Posterior cingulate gyrus (tissue), 11 donors: ENCODE measurements at regions of chr4 and their contacts with region 1.

Region 1: DNA sequence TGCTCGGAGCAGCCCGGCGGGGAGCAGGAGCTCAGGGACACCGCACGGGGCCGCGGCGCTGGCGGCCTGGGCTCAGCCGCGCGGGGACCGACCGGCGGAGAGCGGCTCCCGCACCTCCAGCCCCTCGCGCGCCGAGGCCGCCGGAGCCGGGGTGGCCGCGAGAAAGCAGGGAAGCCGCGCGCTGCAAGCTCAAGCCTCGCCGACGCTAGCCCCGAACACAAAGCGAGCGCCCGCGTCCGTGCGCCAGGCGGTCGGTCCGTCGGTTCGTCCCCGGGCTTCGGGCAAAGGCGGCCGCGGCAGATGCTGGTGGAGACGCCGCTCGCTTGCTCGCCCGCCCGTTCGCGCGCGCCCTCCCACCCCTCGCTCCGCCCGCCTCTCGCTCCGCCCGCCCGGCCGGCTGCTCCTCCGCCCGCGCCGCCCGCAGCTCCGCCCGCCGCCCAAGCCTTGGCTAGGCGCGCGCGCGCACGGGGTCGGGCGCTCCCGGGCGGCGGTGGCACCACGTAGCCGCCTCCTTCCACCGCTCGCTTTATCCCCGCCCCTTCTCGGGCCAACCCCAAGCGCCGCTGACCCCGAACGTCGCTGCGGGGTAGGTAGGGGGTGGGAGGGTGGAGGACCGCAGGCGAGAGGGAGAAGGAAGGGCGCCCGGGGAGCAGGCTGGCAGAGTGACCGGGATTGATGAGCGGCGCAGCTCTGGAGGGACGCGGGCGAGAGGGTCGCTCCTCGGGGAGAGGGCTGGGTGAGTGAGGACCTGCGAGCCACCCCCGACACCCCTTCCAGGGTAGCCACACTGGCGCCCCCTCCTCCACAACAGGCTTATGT is at the start of gene TSPAN5:
- DNase-seq: peak; percentile 70 to 97 (median 81)

Region 2: DNA sequence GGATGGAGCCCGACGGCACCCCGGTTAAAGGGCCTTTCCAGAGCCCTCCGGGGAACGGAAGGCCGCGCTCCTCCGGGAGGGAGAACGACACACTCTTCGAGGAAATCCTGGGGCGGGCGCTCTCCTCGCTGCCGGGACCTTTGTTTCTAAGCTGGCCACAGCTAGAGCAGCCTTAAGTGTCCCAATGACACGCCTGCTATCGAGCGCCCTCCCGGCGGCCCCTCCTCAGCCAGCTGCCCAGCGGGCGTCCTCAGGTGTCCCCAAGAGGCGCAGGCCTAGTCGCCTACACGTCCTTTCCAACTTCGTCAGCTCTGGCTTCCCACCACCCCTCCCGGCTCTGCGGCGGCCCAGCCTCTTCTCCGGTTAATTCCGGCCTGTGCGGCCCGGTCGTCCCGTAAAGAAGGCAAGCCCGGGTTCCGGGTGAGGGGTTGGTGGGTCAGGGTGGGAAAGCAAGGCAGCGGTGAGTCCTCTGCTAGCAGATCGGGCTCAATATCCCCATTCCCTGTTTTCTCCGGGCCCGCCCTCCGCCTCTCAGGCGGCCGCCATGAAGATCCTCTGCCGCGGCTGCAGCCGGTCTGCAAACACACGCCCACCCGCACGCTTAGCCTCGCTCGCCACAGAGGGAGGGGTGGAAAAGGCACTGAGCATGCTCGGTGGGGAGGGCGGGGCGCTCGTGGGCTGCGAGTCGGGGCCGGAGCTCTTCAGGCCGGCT is 397.8 kb before region 1 on chr4:
- intact Hi-C with region 1: loop called (anchors 5 kb)
- DNase-seq: peak; percentile 91 to 99 (median 93)

Region 3: GRCh38 chr4:98430708-98431403 is 227.6 kb before region 1 on chr4:
- intact Hi-C with region 1: no loop called
- DNase-seq: no peak

Region 4: GRCh38 chr4:98467627-98468072 is 190.8 kb before region 1 on chr4:
- intact Hi-C with region 1: loop called (anchors 5 kb)
- DNase-seq: peak; percentile 56 to 96 (median 78)

Region 5: GRCh38 chr4:98566361-98567008 is 92.0 kb before region 1 on chr4:
- intact Hi-C with region 1: loop called (anchors 5 kb)
- DNase-seq: peak; percentile 44 to 95 (median 70)

Region 6: DNA sequence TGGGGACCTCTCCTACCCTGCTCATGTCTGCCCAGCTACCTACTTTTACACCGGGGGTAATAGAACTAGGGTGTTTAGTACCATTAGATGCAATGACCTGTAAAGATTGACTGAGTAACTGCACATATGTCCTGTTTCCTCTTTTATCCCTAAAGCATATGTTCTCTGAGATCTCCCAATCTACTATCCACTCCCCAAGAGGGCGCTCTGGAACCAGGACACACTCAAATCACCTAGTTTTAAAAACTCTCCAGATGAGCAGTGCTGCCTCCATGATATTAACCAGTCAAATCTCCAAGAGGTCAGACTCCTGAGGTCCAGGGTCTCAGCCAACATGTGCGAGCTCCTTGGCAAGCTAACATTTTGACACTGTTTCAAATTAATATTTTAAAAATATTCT is 86.9 kb after region 1 on chr4:
- intact Hi-C with region 1: no loop called
- DNase-seq: peak in 1 of 10 donors; percentile 9

Region 7: GRCh38 chr4:98963538-98964433 is 305.3 kb after region 1 on chr4:
- intact Hi-C with region 1: no loop called
- DNase-seq: peak in 6 of 10 donors; percentile 10 to 81 (median 38)

Region 8: GRCh38 chr4:98995183-98996055 is 336.9 kb after region 1 on chr4 and contains the start of gene METAP1:
- intact Hi-C with region 1: loop called (anchors 2 kb)
- DNase-seq: peak; percentile 78 to 99 (median 90)

Region 9: DNA sequence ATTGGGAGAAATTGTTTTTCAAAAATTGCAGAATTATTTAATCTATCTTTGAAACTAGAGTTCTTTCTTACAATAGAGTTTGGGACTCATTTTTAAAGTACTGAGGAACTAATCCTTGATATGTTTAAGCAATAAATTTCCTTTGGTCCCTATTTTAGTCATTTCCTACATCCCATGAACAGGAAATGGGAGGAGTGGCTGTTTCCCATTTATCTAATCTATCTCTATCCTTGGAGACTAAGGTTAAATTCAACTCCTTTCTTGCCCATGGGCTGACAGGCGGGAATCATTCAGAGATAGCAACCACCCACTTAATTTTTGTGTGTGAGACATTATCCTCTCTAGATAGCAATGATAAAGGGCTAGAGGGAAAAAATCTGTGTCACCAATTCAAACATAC is 1990.9 kb after region 1 on chr4:
- intact Hi-C with region 1: no loop called
- DNase-seq: no peak